Right cardiac atrium (tissue), 5 donors: ENCODE measurements at regions of chr5 and their contacts with region 1.

Region 1: GRCh38 chr5:119411935-119412602 is 40.2 kb upstream of the HSD17B4 start:
- DNase-seq: peak; percentile 33 to 58 (median 53)
- ATAC-seq: peak; percentile 94 to 97
- H3K4me3 ChIP-seq: peak overlapping the region; percentile 82
- H3K27ac ChIP-seq: peak overlapping the region; percentile 23
- H3K4me1 ChIP-seq: no peaks in the 10 kb centered on the region
- H3K27me3 ChIP-seq: no peaks in the 10 kb centered on the region

Region 2: DNA sequence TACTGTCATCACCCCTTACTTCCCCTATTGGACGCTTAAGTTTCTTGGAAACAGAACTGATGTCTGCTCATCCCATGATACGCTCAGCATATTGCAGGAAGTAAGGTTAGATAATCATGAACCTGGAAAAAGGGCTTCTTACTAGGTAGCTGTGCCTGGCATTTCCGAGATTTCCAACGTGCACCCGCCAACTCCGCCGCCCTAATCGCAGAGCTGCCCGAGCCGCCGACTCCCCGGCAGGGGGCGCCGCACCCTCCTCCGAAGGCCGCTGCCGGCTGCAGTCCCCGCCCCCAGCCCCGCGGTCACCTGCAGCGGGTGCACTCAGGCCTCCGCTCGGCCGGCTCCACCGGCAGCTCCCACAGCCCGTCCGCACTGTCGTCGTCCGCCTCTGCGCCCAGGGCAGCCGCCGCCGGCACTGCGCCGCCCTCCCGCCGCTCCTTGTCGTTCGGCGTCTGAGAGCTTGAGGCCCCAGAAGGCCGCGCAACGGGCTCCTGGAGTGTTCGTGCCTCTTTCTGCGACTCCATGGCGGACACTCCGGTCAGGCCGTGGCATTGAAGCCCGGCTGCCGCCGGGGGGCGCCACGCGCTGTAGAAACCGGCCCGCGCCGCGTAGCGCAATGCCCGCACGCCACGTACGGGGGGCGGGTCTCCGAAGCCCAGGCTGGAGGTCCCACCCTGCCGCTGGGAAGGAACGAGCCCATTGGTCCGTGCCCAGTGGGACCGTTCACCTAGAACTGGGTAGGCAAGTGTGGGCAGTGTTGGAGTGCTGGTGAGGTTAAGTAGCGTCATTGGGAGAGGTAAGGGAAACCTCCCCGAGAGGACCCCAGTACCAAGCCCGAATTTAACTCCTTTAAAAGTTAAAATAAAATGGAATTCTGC is 423.8 kb before region 1 on chr5 and contains the start of gene DTWD2:
- intact Hi-C with region 1: loop called in 2 of 4 experiments (anchors 5 kb)
- DNase-seq: peak; percentile 95 to 98 (median 98)
- ATAC-seq: peak; percentile 99 to 100
- H3K4me3 ChIP-seq: peak within 1 kb of the TSS; percentile 63
- H3K27ac ChIP-seq: peak within 1 kb of the TSS; percentile 78
- H3K4me1 ChIP-seq: no peaks in the 10 kb centered on the region
- H3K27me3 ChIP-seq: no peaks in the 10 kb centered on the region
- total RNA-seq, gene DTWD2: 8.1 to 11.5 (median 9.7) TPM

Region 3: GRCh38 chr5:119840175-119840574 is 428.1 kb after region 1 on chr5:
- intact Hi-C with region 1: no loop called
- DNase-seq: no peak
- ATAC-seq: no peak
- H3K4me3 ChIP-seq: no peak overlapping the region
- H3K27ac ChIP-seq: no peak overlapping the region
- H3K4me1 ChIP-seq: no peaks in the 10 kb centered on the region
- H3K27me3 ChIP-seq: no peaks in the 10 kb centered on the region